PC-3 (cell line): ENCODE measurements at regions of chr5 and their contacts with region 1.

Region 1: DNA sequence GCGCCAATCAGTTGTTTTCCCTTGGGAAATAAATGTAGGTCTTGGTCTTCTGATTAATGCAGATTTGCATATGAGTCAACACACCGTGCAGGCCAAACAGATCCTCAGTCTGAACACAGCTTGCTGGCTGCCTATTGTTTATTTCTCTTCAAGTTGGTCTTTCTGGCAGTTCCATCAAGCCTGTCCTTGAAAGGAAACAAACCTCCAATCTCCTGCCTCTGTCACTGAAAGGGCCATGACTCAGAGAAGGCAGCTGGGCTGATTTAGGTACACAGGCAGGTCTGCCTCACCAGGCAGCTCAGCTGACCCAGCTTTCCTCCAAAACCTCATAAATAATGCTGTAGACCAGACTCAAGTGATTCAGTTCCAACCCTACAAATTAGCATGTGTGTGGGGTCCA is 175.9 kb downstream of the MAN2A1 start:
- DNase-seq: peak; percentile 96
- ATAC-seq: peak; percentile 80
- H3K4me3 ChIP-seq: peak overlapping the region; percentile 14; the same call in 1 of the 2 replicates
- H3K27ac ChIP-seq: peak overlapping the region; percentile 96
- H3K4me1 ChIP-seq: peaks cover 75% of the 10 kb centered on the region
- H3K27me3 ChIP-seq: no peaks in the 10 kb centered on the region
- CTCF ChIP-seq: no peak

Region 2: DNA sequence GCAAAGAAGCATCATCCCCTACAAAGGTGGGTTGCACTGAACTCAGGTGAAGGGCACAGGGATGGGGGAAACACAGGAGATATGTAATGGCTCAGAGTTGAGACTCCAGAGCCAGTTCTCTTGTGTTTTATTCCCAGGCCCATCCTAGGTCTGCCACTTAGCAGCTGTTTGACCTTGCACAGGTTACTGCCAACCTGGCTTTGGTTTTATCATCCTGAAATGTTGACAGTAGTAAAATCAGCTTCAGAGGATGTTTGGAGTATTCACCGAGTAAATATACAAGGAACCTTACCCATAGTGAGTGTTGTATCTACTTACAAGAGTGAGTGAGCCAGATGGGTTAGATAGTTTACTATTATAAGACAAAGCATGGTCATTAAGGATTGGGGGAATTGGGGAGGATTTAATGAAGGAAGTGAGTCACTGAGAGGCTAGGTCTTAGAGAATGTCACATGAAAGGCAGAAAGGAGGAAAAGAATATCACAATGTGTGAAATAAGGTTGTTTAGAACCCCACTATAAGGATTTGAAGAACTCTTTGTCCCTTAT is 34.6 kb before region 1 on chr5:
- CTCF ChIA-PET with region 1: no interaction called
- POLR2A ChIA-PET with region 1: interaction called, 3 read pairs
- intact Hi-C with region 1: loop called (anchors 1 kb)
- DNase-seq: peak; percentile 87
- ATAC-seq: peak; percentile 95
- H3K4me3 ChIP-seq: no peak overlapping the region
- H3K27ac ChIP-seq: peak overlapping the region; percentile 75
- H3K4me1 ChIP-seq: peaks cover 33% of the 10 kb centered on the region
- H3K27me3 ChIP-seq: no peaks in the 10 kb centered on the region
- CTCF ChIP-seq: no peak

Region 3: DNA sequence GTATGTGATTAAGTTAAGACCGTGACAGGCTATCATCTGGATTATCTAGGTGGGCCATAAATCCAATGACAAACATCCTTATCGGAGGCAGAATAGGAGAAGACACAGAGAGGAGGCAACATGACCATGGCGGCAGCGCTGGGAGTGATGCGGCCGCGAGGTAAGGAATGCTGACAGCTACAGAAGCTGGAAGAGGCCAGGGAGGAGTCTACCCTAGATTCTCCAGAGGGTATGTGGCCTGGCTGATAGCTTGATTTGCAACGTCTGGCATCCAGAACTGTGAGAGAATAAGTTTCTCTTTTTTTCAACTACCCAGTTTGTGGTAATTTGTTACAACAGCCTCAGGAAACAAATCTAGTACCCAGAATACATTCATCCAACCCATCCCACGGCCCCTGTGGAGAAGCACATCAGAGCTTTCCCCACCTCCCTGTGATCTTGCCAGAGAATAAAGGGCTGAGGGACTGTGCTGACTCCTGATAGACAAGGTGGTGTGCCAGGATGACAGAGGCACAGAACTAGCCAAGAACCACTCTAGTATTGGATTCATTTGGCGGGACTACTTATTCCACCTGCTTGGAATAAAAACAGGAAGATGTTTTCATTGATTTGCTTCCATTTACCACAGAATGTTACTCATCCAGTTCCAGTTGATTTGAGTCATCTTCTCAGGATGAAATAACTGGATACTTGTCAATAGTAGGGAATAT is 11.5 kb after region 1 on chr5:
- CTCF ChIA-PET with region 1: no interaction called
- POLR2A ChIA-PET with region 1: no interaction called
- intact Hi-C with region 1: loop called (anchors 1 kb)
- DNase-seq: peak; percentile 94
- ATAC-seq: peak; percentile 85
- H3K4me3 ChIP-seq: peak overlapping the region; percentile 43; the same call in 1 of the 2 replicates
- H3K27ac ChIP-seq: peak overlapping the region; percentile 83
- H3K4me1 ChIP-seq: peaks cover 26% of the 10 kb centered on the region
- H3K27me3 ChIP-seq: no peaks in the 10 kb centered on the region
- CTCF ChIP-seq: no peak

Region 4: DNA sequence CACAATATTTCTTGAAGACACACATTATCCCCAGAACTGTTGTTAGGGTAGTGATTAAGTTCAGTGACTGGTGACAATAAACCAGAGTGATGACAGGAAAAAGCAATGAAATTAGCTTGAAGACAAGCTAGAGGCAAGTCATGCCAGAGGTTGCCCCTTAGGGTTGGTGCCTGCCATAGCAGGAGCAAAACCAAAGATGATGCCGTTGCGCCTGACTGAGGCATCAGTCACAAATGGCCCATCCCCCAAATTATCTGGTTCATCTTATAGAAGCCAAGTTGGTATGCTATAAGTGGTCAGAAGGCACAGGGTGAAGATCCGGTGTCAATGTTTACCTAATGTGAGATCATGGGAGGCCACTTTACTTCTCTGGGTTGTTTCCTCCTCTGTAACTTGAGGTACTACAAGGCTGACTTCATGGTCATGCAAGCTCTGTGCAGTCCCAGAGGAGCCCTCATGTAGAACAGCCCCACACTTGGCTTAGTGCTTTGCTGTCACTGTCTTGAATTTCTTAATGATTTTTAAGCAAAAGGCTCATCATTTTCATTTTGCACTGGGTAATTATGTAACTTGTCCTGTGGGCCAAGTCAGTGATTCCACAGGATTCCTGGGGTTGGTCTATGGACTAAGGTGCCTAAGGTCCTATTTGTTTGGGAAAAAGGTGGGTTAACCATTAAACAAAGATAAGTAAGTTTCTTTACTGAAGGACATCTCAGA is 35.4 kb after region 1 on chr5:
- CTCF ChIA-PET with region 1: interaction called, 3 read pairs
- POLR2A ChIA-PET with region 1: no interaction called
- intact Hi-C with region 1: loop called (anchors 1 kb)
- DNase-seq: peak; percentile 98
- ATAC-seq: peak; percentile 86
- H3K4me3 ChIP-seq: peak overlapping the region; percentile 39; the same call in 1 of the 2 replicates
- H3K27ac ChIP-seq: peak overlapping the region; percentile 94
- H3K4me1 ChIP-seq: peaks cover 43% of the 10 kb centered on the region
- H3K27me3 ChIP-seq: no peaks in the 10 kb centered on the region
- CTCF ChIP-seq: peak; percentile 39; the same call in 1 of the 2 replicates

Region 5: DNA sequence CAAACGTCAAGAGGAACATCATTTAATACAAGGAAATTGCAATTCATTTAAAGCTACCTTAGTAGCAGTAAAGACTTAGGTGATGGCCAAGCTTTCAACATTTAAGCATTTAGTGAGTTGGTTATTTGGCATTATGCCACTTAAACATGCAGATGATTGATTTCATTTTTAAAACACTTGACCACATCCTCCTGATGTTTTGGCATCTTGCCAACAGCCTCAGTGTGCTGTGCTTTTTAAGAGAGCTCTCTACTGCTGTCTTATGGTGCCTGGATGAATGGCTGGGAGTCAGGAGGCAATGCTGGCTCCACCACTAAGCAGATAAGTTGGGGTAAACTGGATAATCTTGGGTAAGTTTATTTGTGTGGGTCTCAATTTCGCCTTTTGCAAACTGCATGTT is 188.6 kb after region 1 on chr5:
- CTCF ChIA-PET with region 1: no interaction called
- POLR2A ChIA-PET with region 1: no interaction called
- intact Hi-C with region 1: loop called (anchors 5 kb)
- DNase-seq: peak; percentile 82
- ATAC-seq: peak; percentile 46; the same call in 1 of the 2 replicates
- H3K4me3 ChIP-seq: no peak overlapping the region
- H3K27ac ChIP-seq: no peak overlapping the region
- H3K4me1 ChIP-seq: 0 out of 2 replicates have a peak, but pooled peaks cover 4% of the 10 kb centered on the region
- H3K27me3 ChIP-seq: no peaks in the 10 kb centered on the region
- CTCF ChIP-seq: peak; percentile 48; the same call in 1 of the 2 replicates